ENCODE measurements at regions of chr6 and their contacts with region 1.

Region 1: GRCh38 chr6:88982720-88983119 is 19.3 kb upstream of the RNGTT start:
- DNase-seq: no peak
- H3K4me3 Mint-ChIP-seq: no peak overlapping the region
- H3K27ac Mint-ChIP-seq: no peak overlapping the region
- H3K4me1 Mint-ChIP-seq: peaks cover 2% of the 10 kb centered on the region
- H3K27me3 Mint-ChIP-seq: peaks cover 4% of the 10 kb centered on the region

Region 2: DNA sequence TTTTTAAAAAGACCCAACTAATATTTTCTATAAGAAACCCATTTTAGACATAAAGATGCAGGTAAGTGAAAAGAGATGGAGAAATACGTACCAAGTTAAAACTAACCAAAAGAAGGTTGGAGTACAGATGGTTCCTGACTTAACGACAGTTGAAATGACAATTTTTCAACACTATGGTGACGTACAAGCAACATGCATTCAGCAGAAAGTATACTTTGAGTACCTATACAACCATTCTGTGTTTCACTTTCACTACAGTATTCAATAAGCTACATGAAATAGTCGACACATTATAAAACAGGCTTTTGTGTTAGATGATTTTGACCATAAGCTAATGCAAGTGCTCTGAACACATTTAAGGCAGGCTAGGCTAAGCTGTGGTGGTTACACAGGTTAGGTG is 248.2 kb before region 1 on chr6:
- CTCF ChIA-PET with region 1: no interaction called
- DNase-seq: no peak
- H3K4me3 Mint-ChIP-seq: no peak overlapping the region
- H3K27ac Mint-ChIP-seq: no peak overlapping the region
- H3K4me1 Mint-ChIP-seq: peaks cover 15% of the 10 kb centered on the region
- H3K27me3 Mint-ChIP-seq: no peaks in the 10 kb centered on the region

Region 3: DNA sequence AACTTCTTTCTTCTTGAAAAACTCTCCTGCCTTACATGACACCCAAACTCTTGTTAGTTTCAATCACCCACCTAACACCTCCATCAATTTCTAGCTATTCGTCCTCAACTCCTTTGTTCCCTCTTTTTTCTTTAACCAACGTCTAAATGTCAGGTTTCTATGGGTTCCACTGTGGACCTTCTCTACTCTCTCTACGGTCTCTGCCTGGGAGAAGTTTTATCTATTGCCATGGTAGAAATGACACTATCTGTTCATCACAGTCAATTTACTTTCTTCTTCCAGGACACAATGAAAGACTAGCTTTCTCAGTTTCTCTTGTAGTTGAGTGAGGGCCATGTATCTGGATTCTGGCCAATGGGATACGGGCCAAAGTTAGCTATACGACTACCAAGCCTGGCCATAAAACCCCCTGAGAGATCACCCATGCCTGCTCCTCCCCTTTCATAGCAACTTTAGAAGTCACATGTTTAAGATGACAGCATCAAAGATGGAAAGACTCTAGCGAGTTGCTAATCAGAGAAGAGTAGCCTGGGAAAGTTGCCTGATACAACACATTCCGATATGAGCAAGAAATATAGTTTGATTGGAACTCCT is 37.2 kb before region 1 on chr6:
- CTCF ChIA-PET with region 1: no interaction called
- DNase-seq: no peak
- H3K4me3 Mint-ChIP-seq: no peak overlapping the region
- H3K27ac Mint-ChIP-seq: no peak overlapping the region
- H3K4me1 Mint-ChIP-seq: no peaks in the 10 kb centered on the region
- H3K27me3 Mint-ChIP-seq: no peaks in the 10 kb centered on the region

Region 4: DNA sequence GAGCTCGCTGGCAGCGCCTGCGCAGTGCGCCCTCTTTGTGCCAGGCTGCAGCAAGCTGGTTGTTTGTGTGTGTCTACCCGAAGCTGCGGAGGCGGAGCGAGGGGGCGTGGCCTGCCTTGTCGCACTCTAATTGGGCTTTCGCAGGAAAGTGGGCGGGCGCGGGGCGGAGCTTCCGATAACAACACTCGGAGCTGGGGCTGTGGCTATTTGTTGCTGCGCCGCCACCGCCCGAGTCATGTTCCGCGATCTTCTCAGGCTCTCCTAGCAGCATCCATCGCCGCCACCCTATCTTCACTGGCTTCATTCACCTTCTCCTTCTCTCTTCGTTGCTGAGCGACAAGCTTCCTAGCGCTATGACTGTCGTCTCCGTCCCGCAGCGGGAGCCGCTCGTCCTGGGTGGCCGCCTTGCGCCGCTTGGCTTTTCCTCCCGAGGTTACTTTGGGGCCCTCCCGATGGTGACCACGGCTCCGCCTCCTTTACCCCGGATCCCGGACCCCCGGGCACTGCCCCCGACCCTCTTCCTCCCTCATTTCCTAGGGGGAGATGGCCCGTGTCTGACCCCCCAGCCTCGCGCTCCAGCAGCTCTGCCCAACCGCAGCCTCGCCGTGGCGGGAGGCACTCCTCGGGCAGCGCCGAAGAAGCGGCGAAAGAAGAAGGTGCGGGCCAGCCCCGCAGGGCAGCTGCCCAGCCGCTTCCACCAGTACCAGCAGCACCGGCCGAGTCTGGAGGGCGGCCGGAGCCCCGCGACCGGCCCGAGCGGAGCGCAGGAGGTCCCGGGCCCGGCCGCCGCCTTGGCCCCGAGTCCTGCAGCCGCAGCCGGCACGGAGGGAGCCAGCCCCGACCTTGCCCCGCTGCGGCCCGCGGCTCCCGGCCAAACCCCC is 98.1 kb after region 1 on chr6 and contains the start of gene PNRC1:
- CTCF ChIA-PET with region 1: interaction called, 32 read pairs
- DNase-seq: peak; percentile 100
- H3K4me3 Mint-ChIP-seq: peak within 1 kb of the TSS; percentile 95
- H3K27ac Mint-ChIP-seq: peak within 1 kb of the TSS; percentile 100
- H3K4me1 Mint-ChIP-seq: peaks cover 51% of the 10 kb centered on the region
- H3K27me3 Mint-ChIP-seq: peaks cover 8% of the 10 kb centered on the region

Region 5: GRCh38 chr6:89242574-89243330 is 260.0 kb after region 1 on chr6:
- CTCF ChIA-PET with region 1: interaction called, 28 read pairs
- DNase-seq: no peak
- H3K4me3 Mint-ChIP-seq: no peak overlapping the region
- H3K27ac Mint-ChIP-seq: no peak overlapping the region
- H3K4me1 Mint-ChIP-seq: peaks cover 12% of the 10 kb centered on the region
- H3K27me3 Mint-ChIP-seq: peaks cover 27% of the 10 kb centered on the region

Measured in activated naive CD4-positive, alpha-beta T cell treated with anti-CD3 and anti-CD28 coated beads, Interleukin-2, amount 10 ng/mL, durations not matched to agents 7 days and 5 days (primary cell).